ENCODE measurements at regions of chr1 and their contacts with region 1.

Region 1: DNA sequence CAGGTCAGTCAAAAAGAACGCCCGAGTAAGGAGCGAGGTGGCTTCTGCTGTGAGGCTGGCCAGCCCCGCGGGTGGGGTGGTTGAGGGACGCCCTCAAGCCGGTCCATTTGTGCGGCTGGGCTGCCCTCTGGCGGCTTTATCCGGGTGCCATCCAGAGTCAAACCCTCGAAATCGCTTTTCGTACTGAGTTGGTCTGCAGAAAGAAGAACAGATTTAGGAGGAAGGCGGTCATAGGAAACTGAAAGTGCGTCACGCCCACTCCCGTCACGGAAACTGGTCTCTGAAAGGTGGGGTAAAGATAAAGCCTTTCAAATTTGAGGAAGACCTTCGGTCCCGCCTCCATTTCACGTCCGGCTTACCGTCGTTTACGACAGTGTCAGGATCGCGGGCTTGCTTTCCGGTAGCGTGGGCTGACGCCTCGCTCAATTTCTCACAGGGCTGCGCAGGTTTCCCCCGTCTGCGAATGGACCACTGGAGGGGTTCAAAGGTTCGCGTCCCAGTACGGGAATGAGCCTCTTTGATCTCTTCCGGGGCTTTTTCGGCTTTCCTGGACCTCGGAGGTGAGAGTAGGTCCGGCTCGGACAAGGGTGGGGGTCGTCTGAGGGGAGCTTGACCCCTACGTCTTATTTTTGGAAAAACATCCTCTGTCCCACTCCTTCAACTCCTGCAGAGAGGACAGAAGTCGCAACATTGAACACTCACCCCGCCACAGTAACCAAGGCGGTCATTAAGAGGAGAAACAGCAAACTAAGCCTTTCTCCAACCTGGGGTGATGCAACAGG is at the start of gene HAX1:
- DNase-seq: peak; percentile 91 to 95 (median 94)
- ATAC-seq: peak; percentile 90 to 95 (median 93)
- H3K4me3 ChIP-seq: peak within 1 kb of the TSS; percentile 45 to 99 (median 82)
- H3K27ac ChIP-seq: peak within 1 kb of the TSS; percentile 69 to 97 (median 88)
- H3K4me1 ChIP-seq: peaks cover 0 to 22% (median 12%) of the 10 kb centered on the region in 12 donors
- H3K27me3 ChIP-seq: no peaks in the 10 kb centered on the region
- CTCF ChIP-seq: peak; percentile 61 to 96 (median 80)
- POLR2A ChIP-seq: peak in 1 of 2 donors; percentile 63
- total RNA-seq, gene HAX1: 127 to 230 (median 165) TPM

Region 2: DNA sequence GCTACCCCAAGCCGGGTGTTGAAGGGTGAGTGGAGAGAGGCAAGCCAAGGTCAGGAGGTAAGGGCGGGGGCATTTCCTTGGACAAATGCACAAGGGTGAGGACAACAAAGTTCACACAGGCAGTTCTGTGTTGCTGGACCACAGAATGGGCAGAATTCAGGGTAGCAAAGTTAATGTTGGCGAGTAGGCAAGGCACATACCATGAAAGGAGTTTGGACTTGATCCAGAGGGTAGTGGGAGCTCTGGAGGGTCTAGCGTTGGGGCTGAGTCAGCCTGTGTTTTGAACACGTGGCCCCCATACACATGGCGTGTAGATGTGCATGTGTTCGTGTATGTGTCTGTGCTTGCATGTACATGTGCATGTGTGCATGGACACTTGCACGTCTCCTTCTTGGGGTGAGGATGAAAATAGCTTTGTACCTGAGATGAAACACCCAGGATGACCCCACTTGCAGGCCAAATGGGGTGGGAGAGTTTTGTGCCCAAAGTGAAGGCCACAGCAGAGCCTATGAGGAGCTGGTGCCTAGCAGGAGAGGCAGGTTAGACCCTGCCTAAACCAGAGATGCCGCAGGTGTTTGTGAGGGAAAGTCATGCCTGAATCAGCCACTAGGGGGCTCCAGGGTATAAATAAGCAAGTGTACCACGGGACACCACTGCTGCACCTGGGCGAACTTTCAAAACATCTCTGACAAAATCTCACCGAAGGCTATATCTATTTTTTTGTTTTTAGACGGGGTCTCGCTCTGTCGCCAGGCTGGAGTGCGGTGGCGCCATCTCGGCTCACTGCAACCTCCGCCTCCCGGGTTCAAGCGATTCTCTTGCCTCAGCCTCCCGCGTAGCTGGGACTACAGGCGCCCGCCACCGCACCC is 475.4 kb before region 1 on chr1:
- intact Hi-C with region 1: loop called in 2 of 10 experiments (anchors 5 to 10 kb)
- DNase-seq: peak in 4 of 5 donors; percentile 76 to 83 (median 78)
- ATAC-seq: peak; percentile 9 to 76 (median 61)
- H3K4me3 ChIP-seq: no peak overlapping the region
- H3K27ac ChIP-seq: no peak overlapping the region
- H3K4me1 ChIP-seq: peaks cover 0 to 9% (median 0%) of the 10 kb centered on the region in 12 donors
- H3K27me3 ChIP-seq: no peaks in the 10 kb centered on the region
- CTCF ChIP-seq: peak; percentile 89 to 96 (median 92)
- POLR2A ChIP-seq: no peak

Region 3: DNA sequence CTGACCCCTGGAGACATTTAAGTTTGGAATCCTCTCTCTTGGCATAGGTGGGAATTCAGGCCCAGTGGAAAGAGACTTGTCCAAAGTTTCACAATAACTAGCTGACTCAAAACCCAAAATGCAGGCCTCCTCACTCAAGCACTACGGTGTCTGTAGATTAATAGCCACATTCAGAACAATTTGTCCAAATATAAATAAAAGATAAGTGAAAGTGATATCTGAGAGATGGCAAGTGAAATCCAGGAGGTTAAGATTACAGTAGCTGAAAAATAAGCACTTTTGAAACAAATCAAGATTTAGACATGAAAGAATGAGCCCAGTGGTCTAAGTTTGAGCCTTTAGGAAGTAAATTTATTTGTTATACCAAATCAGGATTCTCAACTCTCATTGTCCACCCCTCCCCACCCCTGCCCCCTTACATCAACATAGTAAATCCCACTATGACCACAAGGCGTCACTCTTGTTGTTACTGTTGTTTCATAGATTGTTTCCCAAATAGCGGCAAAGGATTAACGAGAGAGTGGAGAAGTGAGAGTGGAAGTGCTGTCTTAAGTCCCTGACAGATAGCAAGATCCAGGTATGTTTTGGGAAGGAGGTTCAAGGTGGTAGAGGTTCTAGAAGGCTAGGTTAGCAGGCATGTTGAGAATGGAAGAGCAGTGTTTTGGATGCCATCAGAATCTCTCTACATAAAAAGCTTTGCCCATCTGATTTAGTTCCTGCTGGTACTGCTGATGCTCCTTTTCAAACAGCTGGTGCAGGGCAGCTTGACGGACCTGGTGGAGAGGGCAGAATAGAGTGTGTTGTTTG is 73.4 kb before region 1 on chr1:
- intact Hi-C with region 1: loop called in 9 of 10 experiments (anchors 1 to 10 kb)
- DNase-seq: peak in 1 of 5 donors; percentile 28
- ATAC-seq: peak; percentile 48 to 79 (median 68)
- H3K4me3 ChIP-seq: no peak overlapping the region
- H3K27ac ChIP-seq: peak overlapping the region in 1 of 12 donors; percentile 25
- H3K4me1 ChIP-seq: peaks cover 0 to 5% (median 0%) of the 10 kb centered on the region in 12 donors
- H3K27me3 ChIP-seq: no peaks in the 10 kb centered on the region
- CTCF ChIP-seq: peak; percentile 39 to 64 (median 56)
- POLR2A ChIP-seq: no peak

Region 4: GRCh38 chr1:154237435-154237834 is 35.0 kb before region 1 on chr1:
- intact Hi-C with region 1: loop called in 1 of 10 experiments (anchors 5 kb)
- DNase-seq: no peak
- ATAC-seq: no peak
- H3K4me3 ChIP-seq: no peak overlapping the region
- H3K27ac ChIP-seq: no peak overlapping the region
- H3K4me1 ChIP-seq: peaks cover 0 to 2% (median 0%) of the 10 kb centered on the region in 12 donors
- H3K27me3 ChIP-seq: no peaks in the 10 kb centered on the region
- CTCF ChIP-seq: no peak
- POLR2A ChIP-seq: no peak

Region 5: DNA sequence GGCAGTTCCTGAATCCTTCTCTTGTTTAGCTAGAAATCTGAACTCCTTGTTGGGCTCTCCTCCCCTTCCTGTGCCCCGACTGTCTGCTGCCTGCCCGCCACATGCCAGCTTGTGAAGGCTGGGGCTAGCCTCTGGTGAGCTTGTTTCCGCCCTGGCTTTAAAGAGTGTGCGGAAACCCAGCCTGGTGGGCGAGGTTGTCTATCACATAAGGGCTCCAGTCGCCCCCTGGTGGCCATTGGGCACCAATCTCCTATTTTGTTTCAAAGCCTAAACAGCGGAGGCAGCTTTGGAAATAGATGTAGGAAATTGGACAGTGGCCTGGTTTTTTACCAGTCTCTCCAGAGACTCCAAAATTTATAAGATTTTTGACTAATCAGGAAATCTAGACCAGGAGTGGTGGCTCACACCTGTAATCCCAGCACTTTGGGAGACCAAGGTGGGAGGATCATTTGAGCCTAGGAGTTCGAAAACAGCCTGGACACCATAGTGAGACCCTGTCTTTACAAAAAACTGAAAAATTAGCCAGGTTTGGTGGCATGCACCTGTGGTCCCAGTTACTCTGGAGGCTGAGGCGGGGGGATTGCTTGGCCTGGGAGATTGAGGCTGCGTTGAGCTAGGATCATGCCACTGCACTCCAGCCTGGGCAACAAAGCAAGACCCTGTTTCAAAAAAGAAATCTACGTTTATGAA is 62.8 kb after region 1 on chr1:
- intact Hi-C with region 1: loop called in 2 of 10 experiments (anchors 5 to 10 kb)
- DNase-seq: peak; percentile 76 to 91 (median 82)
- ATAC-seq: peak; percentile 52 to 75 (median 73)
- H3K4me3 ChIP-seq: no peak overlapping the region
- H3K27ac ChIP-seq: peak overlapping the region in 7 of 12 donors; percentile 20 to 68 (median 34)
- H3K4me1 ChIP-seq: peaks cover 0 to 36% (median 8%) of the 10 kb centered on the region in 12 donors
- H3K27me3 ChIP-seq: no peaks in the 10 kb centered on the region
- CTCF ChIP-seq: peak; percentile 78 to 94 (median 90)
- POLR2A ChIP-seq: no peak

Region 6: GRCh38 chr1:154391086-154391770 is 118.8 kb after region 1 on chr1:
- intact Hi-C with region 1: no loop called
- DNase-seq: no peak
- ATAC-seq: no peak
- H3K4me3 ChIP-seq: no peak overlapping the region
- H3K27ac ChIP-seq: no peak overlapping the region
- H3K4me1 ChIP-seq: peaks cover 0 to 6% (median 0%) of the 10 kb centered on the region in 12 donors
- H3K27me3 ChIP-seq: no peaks in the 10 kb centered on the region
- CTCF ChIP-seq: no peak
- POLR2A ChIP-seq: no peak